Right ventricle myocardium superior (tissue), 1 donor: ENCODE measurements at regions of chr14 and their contacts with region 1.

Region 1: DNA sequence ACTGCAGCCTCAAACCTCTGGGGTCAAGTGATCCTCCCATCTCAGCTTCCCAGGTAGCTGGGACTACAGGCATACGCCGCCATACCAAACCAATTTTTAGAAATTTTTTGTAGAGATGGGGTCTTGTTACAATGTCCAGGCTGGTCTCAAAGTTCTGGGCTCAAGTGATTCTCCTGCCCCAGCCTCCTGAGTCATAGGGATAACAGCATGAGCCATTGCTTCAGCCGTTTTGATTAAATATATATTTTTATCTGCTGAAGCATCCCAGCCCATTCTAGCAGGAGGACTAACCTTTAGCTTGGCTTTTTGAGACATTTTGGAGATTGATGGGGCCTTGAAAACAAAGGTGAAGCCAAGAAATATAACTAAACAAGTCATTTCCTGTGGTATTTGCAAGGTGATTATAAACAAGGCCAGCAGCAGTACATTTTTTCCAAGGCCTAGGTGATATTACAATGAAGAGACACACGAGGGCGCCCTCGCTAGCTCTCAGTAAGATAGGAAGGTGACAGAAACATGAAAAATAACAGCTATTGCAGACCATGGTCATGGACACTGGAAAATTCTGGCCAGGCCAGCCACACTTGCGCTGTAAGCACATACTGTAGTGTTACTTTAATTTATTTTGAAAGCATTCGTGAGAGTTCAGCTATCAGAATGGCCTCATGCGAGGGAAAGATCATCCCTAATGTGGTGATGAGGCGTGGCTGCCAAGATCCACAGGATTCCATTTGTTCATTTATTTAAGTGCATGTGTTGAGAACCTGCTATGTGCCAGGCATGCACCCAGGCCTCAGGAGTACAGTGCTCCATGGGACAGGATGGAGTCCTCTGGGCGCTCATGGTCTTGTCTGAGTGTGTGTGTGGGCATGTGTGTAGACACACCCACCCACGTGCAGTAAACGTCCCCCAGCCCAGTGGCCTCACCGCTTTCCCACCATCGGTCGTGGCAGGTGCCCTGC is 63.5 kb downstream of the DGLUCY start:
- DNase-seq: peak; percentile 58
- ATAC-seq: peak; percentile 47

Region 2: GRCh38 chr14:90903101-90903500 is 274.3 kb before region 1 on chr14:
- intact Hi-C with region 1: loop called (anchors 5 kb)
- DNase-seq: no peak
- ATAC-seq: peak; percentile 89

Region 3: DNA sequence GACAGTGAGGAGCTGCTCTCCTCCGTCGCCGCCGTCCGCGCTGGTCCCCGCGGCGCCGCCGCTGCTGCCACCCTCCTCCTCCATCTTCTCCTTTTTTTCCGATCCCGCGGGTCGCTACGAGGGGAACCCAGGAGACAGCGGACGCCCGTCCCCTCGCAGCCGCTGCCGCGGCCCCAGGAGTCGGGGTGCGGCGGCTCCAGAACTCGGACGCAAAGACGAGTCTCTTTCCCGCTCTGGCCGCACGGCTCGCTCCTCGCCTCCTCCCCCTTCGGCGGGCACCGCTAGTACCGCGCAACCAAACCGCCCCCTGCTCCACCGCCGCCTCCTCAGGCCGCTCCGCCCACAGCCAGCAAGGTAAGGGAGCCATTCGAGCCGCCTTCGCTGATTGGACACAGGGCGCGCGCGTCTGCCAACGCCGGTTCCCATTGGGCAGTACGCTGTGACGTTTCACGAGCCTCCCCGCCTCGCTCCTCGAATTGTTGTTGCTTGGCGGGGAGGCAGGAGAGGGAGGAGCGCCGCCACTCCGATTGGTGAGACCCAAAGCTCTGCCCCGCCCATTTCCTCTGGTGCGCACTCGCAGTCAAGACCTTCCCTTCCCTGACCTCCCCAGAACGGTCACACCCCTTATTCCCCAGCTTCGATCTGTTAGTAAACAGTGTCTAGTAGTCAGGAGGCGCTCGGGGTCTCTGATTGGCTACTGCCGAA is 116.9 kb before region 1 on chr14 and contains the start of gene RPS6KA5:
- intact Hi-C with region 1: loop called (anchors 10 kb)
- DNase-seq: peak; percentile 100
- ATAC-seq: peak; percentile 97
- total RNA-seq, gene RPS6KA5: 14.6 TPM

Region 4: GRCh38 chr14:91284146-91284790 is 106.9 kb after region 1 on chr14:
- intact Hi-C with region 1: loop called (anchors 5 kb)
- DNase-seq: no peak
- ATAC-seq: peak; percentile 78